GM10248 (cell line): ENCODE measurements at regions of chr20 and their contacts with region 1.

Region 1: DNA sequence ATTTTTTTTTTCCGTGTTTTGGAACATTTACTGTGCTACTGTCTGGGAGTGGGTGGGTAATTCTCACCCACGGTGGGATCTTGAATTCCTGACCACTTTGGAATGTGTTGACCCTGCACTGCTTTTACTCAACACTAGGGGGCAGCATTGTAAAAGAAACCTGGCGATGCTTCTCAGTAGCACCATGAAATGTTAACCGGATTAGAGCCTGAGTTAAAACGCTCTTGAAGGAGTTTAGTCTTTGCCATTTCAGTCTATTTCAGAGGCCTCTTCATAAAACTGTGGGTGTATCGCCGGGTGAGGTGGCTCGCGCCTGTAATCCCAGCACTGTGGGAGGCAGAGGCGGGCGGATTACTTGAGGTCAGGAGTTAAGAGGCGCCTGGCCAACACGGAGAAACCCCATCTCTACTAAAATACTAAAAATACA is 114.4 kb upstream of the PRND start:
- DNase-seq: peak; percentile 72
- CTCF ChIP-seq: peak; percentile 86

Region 2: DNA sequence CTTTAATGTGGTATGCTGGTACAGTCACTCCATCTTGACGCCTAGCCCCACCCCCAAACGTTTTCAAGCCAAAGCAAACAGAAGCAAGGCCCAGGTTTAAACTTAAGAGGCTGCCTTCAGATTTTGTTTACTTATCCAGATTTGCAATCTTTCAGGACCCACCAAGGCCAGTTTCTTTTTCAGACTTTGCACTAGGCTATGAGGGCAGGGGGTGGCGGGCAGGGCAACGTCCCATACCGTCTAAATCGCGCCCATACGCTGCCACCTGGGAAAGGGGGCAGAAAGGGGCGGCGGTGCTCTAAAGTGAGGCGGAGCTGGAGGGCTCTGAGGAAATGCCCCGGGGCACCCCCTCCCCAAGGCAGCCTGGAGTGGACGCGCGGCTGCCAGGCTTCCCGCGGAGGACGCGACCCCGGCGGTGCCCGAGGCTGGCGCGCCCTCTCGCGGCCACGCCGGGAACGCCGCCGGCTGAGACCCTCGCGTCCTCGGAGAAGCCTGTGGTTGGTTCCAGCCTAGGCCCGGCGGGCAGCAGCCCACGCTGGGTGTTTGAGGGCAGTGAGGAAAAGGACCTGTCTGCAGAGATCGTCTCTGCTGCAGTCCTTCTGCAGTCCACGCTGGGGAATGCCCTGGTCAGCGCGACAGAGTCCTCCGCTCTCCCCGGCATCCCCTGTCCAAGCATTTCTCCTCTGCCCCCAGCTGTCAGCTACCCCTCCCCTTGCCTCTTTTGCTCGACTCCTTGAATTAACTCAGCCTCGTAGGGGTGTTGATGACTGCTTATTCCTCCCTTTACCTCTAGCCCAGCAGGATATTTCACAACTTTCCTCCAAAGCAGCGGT is 14.8 kb before region 1 on chr20:
- CTCF ChIA-PET with region 1: interaction called, 19 read pairs
- POLR2A ChIA-PET with region 1: no interaction called
- DNase-seq: peak; percentile 81
- CTCF ChIP-seq: peak; percentile 82

Region 3: GRCh38 chr20:4720041-4720976 is 113.0 kb after region 1 on chr20:
- CTCF ChIA-PET with region 1: interaction called, 120 read pairs
- POLR2A ChIA-PET with region 1: no interaction called
- DNase-seq: peak; percentile 94
- CTCF ChIP-seq: peak; percentile 74